IMR-90 (cell line): ENCODE measurements at regions of chr16 and their contacts with region 1.

Region 1: GRCh38 chr16:48054881-48055601 is 100.8 kb downstream of the ABCC12 start:
- DNase-seq: peak; percentile 71
- ATAC-seq: peak; percentile 83
- H3K4me3 ChIP-seq: no peak overlapping the region
- H3K27ac ChIP-seq: no peak overlapping the region
- H3K4me1 ChIP-seq: peaks cover 6% of the 10 kb centered on the region
- H3K27me3 ChIP-seq: no peaks in the 10 kb centered on the region
- CTCF ChIP-seq: peak; percentile 91
- POLR2A ChIP-seq: no peak
- RAD21 ChIP-seq: peak; percentile 88

Region 2: GRCh38 chr16:47037746-47038458 is 1017.1 kb before region 1 on chr16:
- CTCF ChIA-PET with region 1: no interaction called
- POLR2A ChIA-PET with region 1: no interaction called
- dilution Hi-C with region 1: no loop called
- in situ Hi-C with region 1: no loop called
- intact Hi-C with region 1: loop called (anchors 5 kb)
- DNase-seq: peak; percentile 62
- ATAC-seq: peak; percentile 99
- H3K4me3 ChIP-seq: peak overlapping the region; percentile 74
- H3K27ac ChIP-seq: peak overlapping the region; percentile 62
- H3K4me1 ChIP-seq: no peaks in the 10 kb centered on the region
- H3K27me3 ChIP-seq: peaks cover 4% of the 10 kb centered on the region
- CTCF ChIP-seq: peak; percentile 92
- POLR2A ChIP-seq: no peak
- RAD21 ChIP-seq: peak; percentile 75

Region 3: DNA sequence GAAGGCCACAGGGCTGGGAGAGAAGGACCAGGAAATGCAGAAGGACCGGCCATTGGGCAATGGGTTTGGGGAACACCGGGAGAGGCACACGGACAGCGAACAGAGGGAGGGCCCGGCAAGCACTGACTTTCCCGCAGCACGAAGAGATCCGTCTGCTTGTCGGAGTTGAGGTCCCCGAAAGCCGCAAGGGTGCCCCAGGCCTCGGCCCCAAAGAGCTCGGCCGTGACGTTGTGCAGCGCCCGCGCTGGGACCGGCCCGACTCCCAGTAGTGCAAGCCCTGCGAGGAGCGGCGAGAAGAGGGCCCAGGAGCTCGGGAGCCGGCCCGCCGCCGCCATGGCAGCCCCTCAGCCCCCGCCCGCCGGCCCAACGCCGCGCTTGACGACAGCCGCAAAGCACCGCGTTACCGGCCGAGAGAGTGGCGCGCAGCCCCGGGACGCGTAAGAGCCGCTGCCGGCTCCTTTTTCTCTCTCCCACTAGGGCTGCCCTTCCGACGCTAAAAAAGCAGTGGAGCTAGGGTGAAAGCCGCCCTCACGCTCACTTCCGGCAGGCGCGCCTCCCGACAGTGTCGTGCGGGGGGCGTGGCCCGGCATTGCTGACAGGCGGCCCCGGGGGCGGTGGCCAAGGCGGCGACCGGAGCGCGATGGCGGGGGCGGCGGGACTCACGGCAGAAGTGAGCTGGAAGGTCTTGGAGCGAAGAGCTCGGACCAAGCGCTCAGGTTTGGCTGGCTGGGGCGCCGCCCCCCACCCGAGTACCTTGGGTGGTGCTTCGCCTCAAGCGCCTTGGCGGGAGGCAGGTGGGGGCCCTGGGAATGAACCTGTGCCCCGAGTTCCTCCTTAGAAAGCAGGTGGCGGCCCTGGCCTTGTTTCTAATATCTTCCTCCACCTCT is 594.1 kb before region 1 on chr16 and contains the starts of genes ITFG1 and PHKB:
- CTCF ChIA-PET with region 1: no interaction called
- POLR2A ChIA-PET with region 1: no interaction called
- dilution Hi-C with region 1: no loop called
- in situ Hi-C with region 1: no loop called
- intact Hi-C with region 1: loop called (anchors 5 kb)
- DNase-seq: peak; percentile 90
- ATAC-seq: peak; percentile 95
- H3K4me3 ChIP-seq: peak within 1 kb of the TSS; percentile 84
- H3K27ac ChIP-seq: peak within 1 kb of the TSS; percentile 87
- H3K4me1 ChIP-seq: peaks cover 4% of the 10 kb centered on the region; the same call in 1 of the 2 replicates
- H3K27me3 ChIP-seq: no peaks in the 10 kb centered on the region
- CTCF ChIP-seq: peak; percentile 19; the same call in 1 of the 2 replicates
- POLR2A ChIP-seq: peak; percentile 83
- RAD21 ChIP-seq: no peak; the same call in none of the 2 replicates
- total RNA-seq, gene ITFG1: 57.5 and 60.4 TPM in 2 replicates
- total RNA-seq, gene PHKB: 58.6 and 60.0 TPM in 2 replicates

Region 4: GRCh38 chr16:47732523-47733111 is 322.4 kb before region 1 on chr16:
- CTCF ChIA-PET with region 1: no interaction called
- POLR2A ChIA-PET with region 1: no interaction called
- dilution Hi-C with region 1: no loop called
- in situ Hi-C with region 1: no loop called
- intact Hi-C with region 1: loop called (anchors 10 kb)
- DNase-seq: peak; percentile 99
- ATAC-seq: peak; percentile 66
- H3K4me3 ChIP-seq: no peak overlapping the region
- H3K27ac ChIP-seq: peak overlapping the region; percentile 76; the same call in 1 of the 2 replicates
- H3K4me1 ChIP-seq: peaks cover 12% of the 10 kb centered on the region
- H3K27me3 ChIP-seq: no peaks in the 10 kb centered on the region
- CTCF ChIP-seq: no peak
- POLR2A ChIP-seq: no peak
- RAD21 ChIP-seq: no peak

Region 5: GRCh38 chr16:48123104-48123788 is 68.2 kb after region 1 on chr16:
- CTCF ChIA-PET with region 1: no interaction called
- POLR2A ChIA-PET with region 1: no interaction called
- dilution Hi-C with region 1: no loop called
- in situ Hi-C with region 1: no loop called
- intact Hi-C with region 1: loop called (anchors 5 kb)
- DNase-seq: peak; percentile 100
- ATAC-seq: peak; percentile 78
- H3K4me3 ChIP-seq: no peak overlapping the region
- H3K27ac ChIP-seq: peak overlapping the region; percentile 93
- H3K4me1 ChIP-seq: peaks cover 27% of the 10 kb centered on the region
- H3K27me3 ChIP-seq: no peaks in the 10 kb centered on the region
- CTCF ChIP-seq: no peak
- POLR2A ChIP-seq: peak; percentile 57
- RAD21 ChIP-seq: peak; percentile 12; the same call in 1 of the 2 replicates